SK-N-SH (cell line): ENCODE measurements at regions of chr2 and their contacts with region 1.

Region 1: GRCh38 chr2:151437630-151438029 is 27.9 kb downstream of the RIF1 start:
- DNase-seq: peak; percentile 28
- H3K4me3 ChIP-seq: no peak overlapping the region
- H3K27ac ChIP-seq: no peak overlapping the region
- H3K4me1 ChIP-seq: no peaks in the 10 kb centered on the region
- H3K27me3 ChIP-seq: no peaks in the 10 kb centered on the region
- CTCF ChIP-seq: peak; percentile 70
- EP300 ChIP-seq: no peak
- RAD21 ChIP-seq: peak; percentile 33

Region 2: GRCh38 chr2:151200844-151201243 is 236.8 kb before region 1 on chr2:
- CTCF ChIA-PET with region 1: no interaction called
- POLR2A ChIA-PET with region 1: no interaction called
- DNase-seq: no peak
- H3K4me3 ChIP-seq: no peak overlapping the region
- H3K27ac ChIP-seq: peak overlapping the region; percentile 39 to 91; a peak in 3 of 4 replicates
- H3K4me1 ChIP-seq: peaks cover 0 to 11% of the 10 kb centered on the region in 2 experiments; a peak in 3 of 4 replicates
- H3K27me3 ChIP-seq: no peaks in the 10 kb centered on the region
- CTCF ChIP-seq: no peak
- EP300 ChIP-seq: no peak
- RAD21 ChIP-seq: no peak

Region 3: DNA sequence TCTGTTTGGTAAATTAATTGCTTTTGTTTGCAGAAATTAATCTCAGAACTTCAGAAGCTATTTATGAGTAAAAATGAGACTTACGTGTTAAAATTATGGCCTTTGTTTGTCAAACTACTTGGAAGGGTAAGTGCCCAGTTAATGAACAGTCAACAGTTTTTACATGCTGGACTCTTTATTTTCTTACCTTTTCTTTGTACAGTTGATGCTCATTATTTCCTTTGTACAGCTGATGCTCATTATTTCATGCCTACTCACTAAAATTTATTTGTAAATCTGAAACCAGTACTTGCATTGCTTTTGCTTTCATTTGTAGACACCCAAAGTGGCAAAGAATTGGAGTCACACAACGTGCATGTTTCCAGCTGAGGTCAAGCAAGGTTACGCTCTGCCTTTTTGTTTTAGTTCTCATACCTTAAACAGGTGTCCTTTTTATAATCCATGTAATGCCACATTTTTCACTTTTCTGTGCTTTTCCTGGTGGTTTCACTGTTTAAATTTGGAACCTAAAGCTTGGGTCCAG is 14.7 kb before region 1 on chr2:
- CTCF ChIA-PET with region 1: interaction called, 17 read pairs
- POLR2A ChIA-PET with region 1: no interaction called
- DNase-seq: no peak
- H3K4me3 ChIP-seq: no peak overlapping the region
- H3K27ac ChIP-seq: no peak overlapping the region
- H3K4me1 ChIP-seq: no peaks in the 10 kb centered on the region
- H3K27me3 ChIP-seq: no peaks in the 10 kb centered on the region
- CTCF ChIP-seq: no peak
- EP300 ChIP-seq: no peak
- RAD21 ChIP-seq: no peak

Region 4: GRCh38 chr2:151569170-151569569 is 131.5 kb after region 1 on chr2:
- CTCF ChIA-PET with region 1: no interaction called
- POLR2A ChIA-PET with region 1: no interaction called
- DNase-seq: no peak
- H3K4me3 ChIP-seq: no peak overlapping the region
- H3K27ac ChIP-seq: no peak overlapping the region
- H3K4me1 ChIP-seq: no peaks in the 10 kb centered on the region
- H3K27me3 ChIP-seq: no peaks in the 10 kb centered on the region
- CTCF ChIP-seq: no peak
- EP300 ChIP-seq: no peak
- RAD21 ChIP-seq: no peak